ENCODE measurements at regions of chrX and their contacts with region 1.

Region 1: DNA sequence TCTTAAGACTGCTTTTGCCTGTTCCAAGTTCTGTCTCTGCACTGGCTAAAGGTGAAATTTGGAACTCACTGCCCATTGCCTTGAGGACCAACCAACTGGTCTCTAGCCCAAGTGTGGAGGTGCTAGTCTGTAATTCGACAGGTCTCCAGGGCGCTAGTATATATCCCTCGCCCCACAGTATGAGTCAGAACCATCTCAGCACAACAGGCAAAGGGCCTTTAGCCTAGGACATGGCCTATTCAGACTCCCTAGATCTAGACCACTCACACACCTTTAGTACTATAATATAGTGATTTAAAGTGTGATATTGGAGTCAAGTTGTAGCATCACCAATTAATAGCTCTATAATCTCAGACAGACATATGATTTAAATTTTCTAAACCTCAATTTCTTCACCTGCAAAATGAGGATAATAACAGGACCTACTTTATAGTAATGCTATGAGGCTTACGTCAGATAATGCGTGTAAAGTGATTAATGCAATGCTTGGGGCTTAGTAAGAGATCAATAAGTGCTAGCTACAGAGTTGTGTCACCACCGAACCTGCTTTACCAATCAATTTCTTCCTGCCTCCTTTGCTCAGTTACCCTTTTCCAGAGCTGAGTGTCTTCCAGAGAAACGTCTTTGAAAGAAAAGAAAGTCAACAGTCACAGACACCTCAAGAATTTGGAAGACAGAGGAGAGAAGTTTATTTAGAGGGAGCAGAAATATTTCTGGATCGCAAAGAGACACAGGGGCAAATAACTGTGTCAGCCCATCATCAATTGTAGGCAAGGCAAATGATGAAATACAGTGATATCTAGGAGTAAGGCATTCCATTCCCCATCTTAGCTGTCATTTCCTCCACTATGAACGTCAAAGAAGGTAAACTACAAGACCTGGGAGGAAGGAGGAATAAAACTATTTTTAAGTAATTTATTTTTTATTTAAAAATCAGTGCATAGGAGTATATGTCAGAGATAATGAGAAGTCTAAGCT is 2.3 kb downstream of the NOX1 start:
- DNase-seq: peak in 1 of 2 experiments; percentile 13
- H3K4me3 ChIP-seq: no peak overlapping the region
- H3K4me3 Mint-ChIP-seq: peak overlapping the region; percentile 61
- H3K27ac Mint-ChIP-seq: peak overlapping the region; percentile 11
- H3K4me1 ChIP-seq: peaks cover 11% of the 10 kb centered on the region
- H3K4me1 Mint-ChIP-seq: peaks cover 23% of the 10 kb centered on the region
- H3K27me3 ChIP-seq: no peaks in the 10 kb centered on the region
- H3K27me3 Mint-ChIP-seq: no peaks in the 10 kb centered on the region
- CTCF ChIP-seq: no peak

Region 2: DNA sequence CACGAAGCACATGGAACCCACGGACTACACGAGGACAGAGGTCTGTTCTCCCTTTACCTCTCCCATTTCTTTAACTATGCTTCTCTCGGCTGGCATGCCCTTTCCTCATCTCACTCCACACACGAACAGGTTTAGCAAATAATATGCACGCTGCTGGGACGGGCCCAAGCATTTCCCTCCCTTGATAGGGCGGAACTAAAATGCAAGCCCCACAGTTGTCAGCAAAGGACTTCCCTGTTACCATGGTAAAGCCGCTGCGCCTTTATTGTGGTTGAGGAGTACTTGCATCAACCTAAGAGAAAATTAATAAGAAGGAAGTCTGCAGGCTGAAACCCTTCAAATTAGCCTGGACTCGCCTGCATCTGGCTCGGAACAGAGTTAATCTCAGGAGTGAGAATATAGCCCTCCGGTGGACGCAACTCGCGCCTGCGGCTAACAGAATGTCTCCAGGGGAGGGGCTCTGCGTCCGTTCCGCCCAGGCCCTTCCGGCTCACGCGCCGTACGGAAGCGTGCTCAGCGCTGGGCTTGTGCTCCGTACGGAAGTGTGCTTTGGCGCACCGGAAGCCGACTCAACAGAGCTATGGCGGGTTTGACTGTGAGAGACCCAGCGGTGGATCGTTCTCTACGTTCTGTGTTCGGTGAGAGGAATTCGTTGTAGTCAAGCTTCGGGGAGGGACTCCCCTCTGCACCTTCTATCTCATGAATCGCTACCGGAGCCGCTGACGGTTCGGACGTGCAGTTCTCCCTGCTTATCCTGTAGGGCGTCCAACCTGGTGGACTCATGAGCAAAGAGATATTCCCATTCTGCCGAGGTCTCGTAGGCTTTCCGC is 51.8 kb before region 1 on chrX and contains the start of gene CSTF2:
- CTCF ChIA-PET with region 1: no interaction called
- POLR2A ChIA-PET with region 1: no interaction called
- intact Hi-C with region 1: loop called (anchors 5 kb)
- DNase-seq: peak; percentile 80
- H3K4me3 ChIP-seq: peak within 1 kb of the TSS; percentile 50
- H3K4me3 Mint-ChIP-seq: peak within 1 kb of the TSS; percentile 98
- H3K27ac Mint-ChIP-seq: peak within 1 kb of the TSS; percentile 98
- H3K4me1 ChIP-seq: no peaks in the 10 kb centered on the region
- H3K4me1 Mint-ChIP-seq: peaks cover 7% of the 10 kb centered on the region
- H3K27me3 ChIP-seq: no peaks in the 10 kb centered on the region
- H3K27me3 Mint-ChIP-seq: no peaks in the 10 kb centered on the region
- CTCF ChIP-seq: no peak
- total RNA-seq, gene CSTF2: 41.5 and 44.9 TPM in 2 replicates

Measured in Caco-2 (cell line).